PC-3 (cell line): ENCODE measurements at regions of chr6 and their contacts with region 1.

Region 1: GRCh38 chr6:28683944-28684538 is 158.4 kb downstream of the GPX5 start:
- DNase-seq: peak; percentile 70
- ATAC-seq: peak; percentile 73
- H3K4me3 ChIP-seq: peak overlapping the region; percentile 72
- H3K27ac ChIP-seq: no peak overlapping the region
- H3K4me1 ChIP-seq: peaks cover 13% of the 10 kb centered on the region; the same call in 1 of the 2 replicates
- H3K27me3 ChIP-seq: 0 out of 2 replicates have a peak, but pooled peaks cover 3% of the 10 kb centered on the region
- CTCF ChIP-seq: peak; percentile 75

Region 2: GRCh38 chr6:28496099-28496779 is 187.8 kb before region 1 on chr6:
- CTCF ChIA-PET with region 1: no interaction called
- POLR2A ChIA-PET with region 1: no interaction called
- intact Hi-C with region 1: loop called (anchors 1 kb)
- DNase-seq: peak; percentile 26
- ATAC-seq: peak; percentile 35; the same call in 1 of the 2 replicates
- H3K4me3 ChIP-seq: no peak overlapping the region
- H3K27ac ChIP-seq: no peak overlapping the region
- H3K4me1 ChIP-seq: peaks cover 13% of the 10 kb centered on the region
- H3K27me3 ChIP-seq: peaks cover 21% of the 10 kb centered on the region; the same call in 1 of the 2 replicates
- CTCF ChIP-seq: peak; percentile 53

Region 3: DNA sequence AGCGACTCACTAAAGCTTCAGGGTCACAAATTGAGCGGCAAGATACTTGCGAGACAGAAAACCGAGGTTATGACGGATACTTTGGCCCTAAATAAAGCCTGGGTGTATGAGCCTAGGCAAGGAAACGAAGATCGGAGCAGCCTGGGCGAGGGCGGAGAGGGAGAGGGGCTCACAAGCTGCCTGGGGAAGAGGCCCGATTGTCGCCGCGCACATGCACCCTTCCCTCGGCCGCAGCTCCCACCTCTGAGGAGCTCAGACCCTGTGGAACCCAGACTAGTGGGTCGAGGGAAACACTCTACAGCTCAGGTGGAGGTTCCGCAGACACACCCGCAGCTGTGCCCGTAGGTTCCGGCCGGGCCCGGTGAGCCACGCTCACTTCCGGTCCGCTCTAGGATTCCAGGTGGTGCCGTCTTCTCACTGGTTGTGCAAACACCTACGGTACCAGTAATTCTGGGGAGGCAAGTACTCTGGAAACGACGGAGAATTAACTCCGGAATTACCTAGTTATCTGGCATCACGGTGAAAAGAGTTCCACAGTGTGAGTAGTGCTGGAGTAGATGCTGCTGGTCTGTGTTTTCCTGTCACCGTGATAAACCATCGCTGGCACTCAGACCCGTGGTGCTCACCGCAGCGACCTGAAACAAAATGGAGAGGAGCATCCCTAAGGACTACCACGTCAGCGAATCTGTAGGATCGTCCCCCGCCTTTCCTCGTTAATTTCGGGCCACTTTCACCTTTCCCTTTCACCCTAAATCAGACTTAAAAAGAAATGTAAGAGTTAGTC is 96.9 kb before region 1 on chr6:
- CTCF ChIA-PET with region 1: no interaction called
- POLR2A ChIA-PET with region 1: no interaction called
- intact Hi-C with region 1: loop called (anchors 2 kb)
- DNase-seq: peak; percentile 85
- ATAC-seq: peak; percentile 98
- H3K4me3 ChIP-seq: peak overlapping the region; percentile 89
- H3K27ac ChIP-seq: peak overlapping the region; percentile 33
- H3K4me1 ChIP-seq: peaks cover 24% of the 10 kb centered on the region
- H3K27me3 ChIP-seq: no peaks in the 10 kb centered on the region
- CTCF ChIP-seq: no peak

Region 4: GRCh38 chr6:28863604-28864320 is 179.7 kb after region 1 on chr6:
- CTCF ChIA-PET with region 1: no interaction called
- POLR2A ChIA-PET with region 1: no interaction called
- intact Hi-C with region 1: loop called (anchors 1 kb)
- DNase-seq: peak; percentile 91
- ATAC-seq: peak; percentile 61
- H3K4me3 ChIP-seq: peak overlapping the region; percentile 87
- H3K27ac ChIP-seq: peak overlapping the region; percentile 22; the same call in 1 of the 2 replicates
- H3K4me1 ChIP-seq: peaks cover 29% of the 10 kb centered on the region
- H3K27me3 ChIP-seq: no peaks in the 10 kb centered on the region
- CTCF ChIP-seq: no peak

Region 5: DNA sequence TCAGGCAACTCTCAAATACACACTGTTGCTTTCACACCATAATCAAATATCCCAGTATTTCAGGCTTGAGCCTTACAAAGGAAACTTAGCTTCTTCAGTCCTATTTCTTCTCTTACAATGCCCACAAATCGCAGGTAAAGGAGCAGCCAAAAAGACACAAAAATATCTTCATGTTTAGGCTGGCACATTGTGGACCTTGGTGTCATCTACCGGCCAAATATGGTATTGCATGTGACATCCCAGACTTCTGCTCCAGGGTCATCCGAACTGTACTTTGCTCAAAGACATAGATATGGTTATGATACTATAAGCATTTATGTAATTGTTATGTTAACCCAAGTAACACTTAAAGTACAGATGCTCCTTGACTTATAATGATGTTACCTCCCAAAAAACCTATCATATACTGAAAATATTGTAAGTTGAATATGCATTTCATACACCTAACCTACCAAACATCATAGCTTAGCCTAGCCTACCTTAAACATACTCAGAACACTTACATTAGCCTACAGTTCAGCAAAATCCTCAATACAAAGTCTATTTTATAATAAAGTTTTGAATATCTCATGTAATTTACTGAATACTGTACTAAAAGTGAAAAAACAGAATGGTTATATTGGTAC is 905.5 kb after region 1 on chr6:
- CTCF ChIA-PET with region 1: no interaction called
- POLR2A ChIA-PET with region 1: no interaction called
- intact Hi-C with region 1: loop called (anchors 5 kb)
- DNase-seq: peak; percentile 71
- ATAC-seq: peak; percentile 68
- H3K4me3 ChIP-seq: no peak overlapping the region
- H3K27ac ChIP-seq: no peak overlapping the region
- H3K4me1 ChIP-seq: no peaks in the 10 kb centered on the region
- H3K27me3 ChIP-seq: peaks cover 23% of the 10 kb centered on the region
- CTCF ChIP-seq: peak; percentile 97